Activated CD4-positive, alpha-beta T cell treated with anti-CD3 and anti-CD28 coated beads, Interleukin-2, amount 10 ng/mL, durations not matched to agents 24 days and 14 days (primary cell): ENCODE measurements at regions of chr7 and their contacts with region 1.

Region 1: DNA sequence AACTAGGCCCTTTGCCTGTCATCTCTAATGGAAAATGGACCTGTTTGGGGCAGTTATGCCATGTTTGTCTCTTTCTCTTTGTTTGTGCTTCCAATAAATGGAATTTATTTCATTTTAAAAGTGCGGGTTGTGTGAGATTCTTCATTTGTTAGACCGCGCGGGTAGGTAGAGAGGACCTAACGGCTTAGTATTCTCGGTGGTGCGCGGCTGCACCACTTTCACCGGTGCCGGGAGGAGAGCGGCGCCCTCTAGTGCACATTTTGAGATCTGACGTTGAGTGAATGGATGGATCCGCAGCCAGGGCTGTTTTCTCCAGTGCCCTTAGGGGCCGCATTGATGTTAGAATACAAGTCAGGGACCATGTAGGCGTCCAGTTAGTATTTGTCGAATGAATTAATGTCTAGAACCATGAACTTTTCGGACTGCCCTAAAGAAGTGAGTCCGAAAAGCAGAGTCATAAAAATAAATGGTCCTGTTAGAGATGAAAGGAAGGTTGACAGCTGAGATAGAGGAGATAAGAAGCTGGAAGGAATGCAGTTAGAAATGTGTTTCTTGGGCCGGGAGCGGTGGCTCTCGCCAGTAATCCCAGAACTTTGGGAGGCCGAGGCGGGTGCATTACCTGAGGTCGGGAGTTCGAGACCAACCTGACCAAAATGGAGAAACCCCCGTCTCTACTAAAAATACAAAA is 29.3 kb upstream of the GIMAP8 start:
- DNase-seq: peak; percentile 96
- H3K4me3 Mint-ChIP-seq: peak overlapping the region; percentile 39
- H3K27ac Mint-ChIP-seq: no peak overlapping the region
- H3K4me1 Mint-ChIP-seq: peaks cover 5% of the 10 kb centered on the region
- H3K27me3 Mint-ChIP-seq: peaks cover 2% of the 10 kb centered on the region

Region 2: DNA sequence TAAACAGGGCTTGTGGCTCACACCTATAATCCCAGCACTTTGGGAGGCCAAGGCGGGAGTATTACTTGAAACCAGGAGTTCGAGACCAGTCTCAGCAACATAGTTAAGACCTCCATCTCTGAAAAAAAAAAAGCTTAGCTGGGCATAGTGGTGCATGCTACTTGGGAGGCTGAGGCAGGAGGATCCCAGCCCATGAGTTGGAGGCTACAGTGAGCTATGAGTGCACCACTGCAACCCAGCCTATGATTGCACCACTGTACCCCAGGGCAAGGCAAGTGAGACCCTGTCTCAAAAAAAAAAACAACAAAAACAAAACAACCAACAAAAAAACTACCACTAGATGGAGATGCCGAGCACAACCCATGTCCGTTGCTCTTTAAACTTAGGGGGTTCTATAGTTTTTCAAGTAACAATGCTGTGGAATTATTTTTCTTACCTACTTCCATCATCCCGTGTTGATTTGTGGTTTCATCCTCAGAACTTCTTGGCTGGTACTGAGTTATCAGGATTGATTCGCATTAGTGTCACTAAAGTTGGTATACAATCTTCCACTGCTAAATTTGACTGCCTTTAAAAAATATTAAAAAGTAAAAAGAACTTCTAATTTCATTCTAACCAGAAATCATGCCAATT is 64.8 kb before region 1 on chr7:
- intact Hi-C with region 1: loop called (anchors 1 kb)
- DNase-seq: peak; percentile 79
- H3K4me3 Mint-ChIP-seq: no peak overlapping the region
- H3K27ac Mint-ChIP-seq: peak overlapping the region; percentile 41
- H3K4me1 Mint-ChIP-seq: peaks cover 39% of the 10 kb centered on the region
- H3K27me3 Mint-ChIP-seq: peaks cover 3% of the 10 kb centered on the region

Region 3: DNA sequence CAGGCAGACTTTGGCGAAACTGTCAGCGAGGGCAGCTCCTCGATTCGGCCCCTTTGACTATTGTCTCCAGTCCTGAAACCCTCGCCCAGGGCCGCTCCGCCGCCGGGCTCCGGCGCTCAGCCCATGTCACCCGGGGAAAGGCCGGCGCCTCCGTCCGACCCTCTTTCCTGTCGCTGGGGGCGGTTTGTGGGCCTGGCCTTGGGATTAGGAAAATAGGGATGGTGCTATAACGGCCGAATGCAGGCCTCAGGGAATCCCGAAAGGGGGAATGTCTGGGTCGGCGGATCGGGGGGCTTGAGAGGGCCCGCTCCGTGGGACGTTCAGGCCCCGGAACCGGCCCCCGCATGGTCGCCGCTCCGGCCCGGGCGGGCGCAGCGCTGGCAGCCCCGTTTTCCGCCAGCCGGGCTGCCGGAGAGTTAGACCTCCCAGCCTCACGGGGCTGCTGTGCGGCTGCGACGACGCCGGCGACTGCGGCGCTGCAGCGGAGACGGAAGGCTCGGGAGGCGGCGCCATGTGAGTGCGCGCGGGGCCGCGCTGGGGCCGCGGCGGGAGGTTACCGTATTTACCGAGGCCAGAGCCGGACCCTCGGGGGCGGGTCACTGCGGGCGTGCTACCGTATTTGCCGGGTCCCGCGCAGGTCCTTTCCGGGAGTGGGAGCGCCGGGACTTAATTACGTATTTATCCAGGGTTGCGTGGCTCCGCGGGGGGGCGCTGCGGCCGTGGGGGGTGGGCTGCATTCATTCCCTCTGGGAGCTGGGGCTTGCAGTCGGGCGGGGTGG is 16.1 kb before region 1 on chr7:
- intact Hi-C with region 1: loop called (anchors 1 kb)
- DNase-seq: peak; percentile 95
- H3K4me3 Mint-ChIP-seq: peak overlapping the region; percentile 87
- H3K27ac Mint-ChIP-seq: peak overlapping the region; percentile 89
- H3K4me1 Mint-ChIP-seq: peaks cover 34% of the 10 kb centered on the region
- H3K27me3 Mint-ChIP-seq: no peaks in the 10 kb centered on the region